PC-9 (cell line): ENCODE measurements at regions of chr1 and their contacts with region 1.

Region 1: GRCh38 chr1:91611498-91611917 is 110.9 kb downstream of the CDC7 start:
- DNase-seq: no peak
- H3K4me3 ChIP-seq: no peak overlapping the region
- H3K27ac ChIP-seq: no peak overlapping the region
- H3K4me1 ChIP-seq: peaks cover 37% of the 10 kb centered on the region
- H3K27me3 ChIP-seq: no peaks in the 10 kb centered on the region
- CTCF ChIP-seq: no peak

Region 2: DNA sequence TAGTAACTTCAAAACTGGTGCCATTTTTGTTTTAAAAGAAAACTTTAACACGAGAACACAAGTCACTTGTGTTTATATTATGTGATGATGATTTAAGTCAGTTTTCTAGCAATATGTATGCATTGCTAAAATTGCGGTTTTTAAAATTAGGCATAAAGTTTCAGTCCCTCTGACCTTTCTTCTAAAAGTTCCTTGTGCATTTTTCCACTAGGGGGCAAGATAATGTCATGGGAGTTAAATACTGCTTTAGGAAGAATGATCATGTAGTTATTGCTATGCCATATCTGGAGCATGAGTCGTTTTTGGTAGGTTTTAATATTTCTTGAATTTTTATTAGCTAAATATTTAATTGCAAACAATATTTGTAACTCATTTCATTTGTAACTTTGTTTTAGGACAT is 100.1 kb before region 1 on chr1:
- CTCF ChIA-PET with region 1: no interaction called
- POLR2A ChIA-PET with region 1: no interaction called
- intact Hi-C with region 1: no loop called
- DNase-seq: peak in 1 of 2 experiments; percentile 50
- H3K4me3 ChIP-seq: no peak overlapping the region
- H3K27ac ChIP-seq: no peak overlapping the region
- H3K4me1 ChIP-seq: no peaks in the 10 kb centered on the region
- H3K27me3 ChIP-seq: no peaks in the 10 kb centered on the region
- CTCF ChIP-seq: peak; percentile 87

Region 3: GRCh38 chr1:91569411-91570119 is 41.9 kb before region 1 on chr1:
- CTCF ChIA-PET with region 1: no interaction called
- POLR2A ChIA-PET with region 1: no interaction called
- intact Hi-C with region 1: loop called (anchors 2 kb)
- DNase-seq: peak; percentile 73 to 89
- H3K4me3 ChIP-seq: no peak overlapping the region
- H3K27ac ChIP-seq: peak overlapping the region; percentile 57
- H3K4me1 ChIP-seq: peaks cover 17% of the 10 kb centered on the region
- H3K27me3 ChIP-seq: no peaks in the 10 kb centered on the region
- CTCF ChIP-seq: no peak

Region 4: DNA sequence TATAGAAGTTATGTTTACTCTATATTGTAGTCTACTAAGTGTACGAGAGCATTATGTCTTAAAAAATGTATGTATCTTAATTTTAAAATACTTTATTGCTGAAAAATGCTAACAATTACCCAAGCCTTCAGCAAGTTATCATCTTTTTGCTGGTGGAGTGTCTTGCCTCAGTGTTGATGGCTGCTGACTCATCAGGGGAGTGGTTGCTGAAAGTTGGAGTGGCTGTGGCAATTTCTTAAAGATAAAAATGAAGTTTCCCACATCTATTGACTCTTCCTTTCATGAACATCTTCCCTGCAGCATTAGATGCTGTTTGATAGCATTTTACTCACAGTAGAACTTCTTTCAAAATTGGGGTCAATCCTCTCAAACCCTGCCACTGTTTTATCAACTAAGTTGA is 15.0 kb before region 1 on chr1:
- CTCF ChIA-PET with region 1: no interaction called
- POLR2A ChIA-PET with region 1: interaction called, 12 read pairs
- intact Hi-C with region 1: no loop called
- DNase-seq: no peak
- H3K4me3 ChIP-seq: no peak overlapping the region
- H3K27ac ChIP-seq: no peak overlapping the region
- H3K4me1 ChIP-seq: no peaks in the 10 kb centered on the region
- H3K27me3 ChIP-seq: no peaks in the 10 kb centered on the region
- CTCF ChIP-seq: no peak

Region 5: GRCh38 chr1:91645031-91645430 is 33.5 kb after region 1 on chr1:
- CTCF ChIA-PET with region 1: no interaction called
- POLR2A ChIA-PET with region 1: no interaction called
- intact Hi-C with region 1: no loop called
- DNase-seq: no peak
- H3K4me3 ChIP-seq: no peak overlapping the region
- H3K27ac ChIP-seq: no peak overlapping the region
- H3K4me1 ChIP-seq: no peaks in the 10 kb centered on the region
- H3K27me3 ChIP-seq: no peaks in the 10 kb centered on the region
- CTCF ChIP-seq: no peak

Region 6: GRCh38 chr1:91680556-91681155 is 69.1 kb after region 1 on chr1:
- CTCF ChIA-PET with region 1: no interaction called
- POLR2A ChIA-PET with region 1: no interaction called
- intact Hi-C with region 1: no loop called
- DNase-seq: no peak
- H3K4me3 ChIP-seq: no peak overlapping the region
- H3K27ac ChIP-seq: no peak overlapping the region
- H3K4me1 ChIP-seq: no peaks in the 10 kb centered on the region
- H3K27me3 ChIP-seq: no peaks in the 10 kb centered on the region
- CTCF ChIP-seq: no peak

Region 7: DNA sequence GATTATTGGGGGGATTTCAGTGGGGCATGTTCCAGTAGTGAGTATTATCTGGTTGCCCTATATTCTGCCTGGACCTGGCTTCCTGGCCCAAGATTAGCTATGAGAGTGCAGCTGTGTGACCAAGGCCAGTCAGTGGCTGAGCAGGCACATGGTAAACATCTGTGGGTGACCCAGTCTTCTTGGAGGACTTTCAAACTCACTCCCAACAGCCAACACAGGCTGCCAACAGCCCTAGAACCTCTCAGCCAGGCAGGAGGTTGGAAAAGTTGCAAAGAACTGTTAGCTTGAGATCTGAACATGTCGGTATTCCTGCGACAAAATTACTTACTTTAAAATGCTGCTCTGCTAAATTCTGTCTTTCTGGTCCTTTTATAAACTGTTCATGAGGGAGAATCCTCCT is 82.0 kb after region 1 on chr1:
- CTCF ChIA-PET with region 1: no interaction called
- POLR2A ChIA-PET with region 1: no interaction called
- intact Hi-C with region 1: no loop called
- DNase-seq: no peak
- H3K4me3 ChIP-seq: no peak overlapping the region
- H3K27ac ChIP-seq: no peak overlapping the region
- H3K4me1 ChIP-seq: peaks cover 9% of the 10 kb centered on the region; the same call in 1 of the 2 replicates
- H3K27me3 ChIP-seq: no peaks in the 10 kb centered on the region
- CTCF ChIP-seq: no peak